ENCODE measurements at regions of chr22 and their contacts with region 1.

Region 1: GRCh38 chr22:36065775-36066559 is 37.3 kb upstream of the RBFOX2 start:
- DNase-seq: peak; percentile 73
- H3K4me3 Mint-ChIP-seq: peak overlapping the region; percentile 72
- H3K27ac Mint-ChIP-seq: peak overlapping the region; percentile 40
- H3K4me1 Mint-ChIP-seq: peaks cover 11% of the 10 kb centered on the region
- H3K27me3 Mint-ChIP-seq: peaks cover 6% of the 10 kb centered on the region

Region 2: DNA sequence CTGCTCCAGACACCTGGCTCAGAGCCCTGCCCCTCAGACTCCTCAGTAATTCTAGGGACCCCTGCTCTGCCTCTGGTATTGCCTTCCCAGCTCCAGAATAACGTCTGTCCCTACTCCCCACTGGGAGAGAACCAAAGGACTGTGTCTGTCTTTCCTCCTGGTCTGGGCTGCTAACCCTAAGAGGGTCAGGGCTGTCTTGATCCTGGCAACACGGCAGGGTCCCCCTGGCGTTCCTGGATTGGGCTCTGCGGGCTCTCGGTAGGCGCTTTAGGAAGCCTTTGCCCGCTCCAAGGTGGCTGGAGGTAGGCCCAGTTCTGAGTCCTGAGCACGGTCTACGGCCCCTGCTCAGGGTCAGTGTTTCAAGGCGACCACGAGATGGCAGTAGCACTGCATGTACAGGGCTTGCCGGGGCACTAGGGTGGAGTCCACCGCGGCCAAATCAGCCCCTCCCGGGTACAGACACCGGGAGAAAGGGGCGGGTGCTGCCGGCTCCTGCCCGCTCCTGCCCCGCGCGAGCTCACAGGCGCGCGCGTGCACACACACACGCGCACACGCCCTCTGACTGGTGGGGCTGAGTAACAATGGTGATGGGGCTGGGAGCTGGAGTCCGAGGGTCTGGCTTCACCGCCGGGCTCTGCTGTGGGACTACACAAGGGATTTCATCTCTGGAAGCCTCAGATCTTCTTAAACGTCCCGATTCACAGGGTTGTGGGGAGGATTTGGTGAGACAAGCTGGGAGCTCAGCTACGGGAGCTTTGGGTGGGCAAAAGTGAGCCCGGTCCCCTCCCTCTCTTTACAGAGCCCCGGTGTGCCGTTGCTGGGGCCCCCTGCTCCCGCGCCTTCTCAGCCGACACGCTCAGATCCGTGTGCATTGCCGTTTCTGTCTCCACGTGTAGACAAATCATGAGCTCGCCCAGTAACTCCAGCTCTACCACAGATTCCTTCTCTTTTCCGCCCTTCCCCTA is 715.1 kb before region 1 on chr22:
- CTCF ChIA-PET with region 1: interaction called, 10 read pairs
- POLR2A ChIA-PET with region 1: no interaction called
- DNase-seq: peak; percentile 91
- H3K4me3 Mint-ChIP-seq: peak overlapping the region; percentile 74
- H3K27ac Mint-ChIP-seq: no peak overlapping the region
- H3K4me1 Mint-ChIP-seq: peaks cover 24% of the 10 kb centered on the region
- H3K27me3 Mint-ChIP-seq: peaks cover 5% of the 10 kb centered on the region

Region 3: DNA sequence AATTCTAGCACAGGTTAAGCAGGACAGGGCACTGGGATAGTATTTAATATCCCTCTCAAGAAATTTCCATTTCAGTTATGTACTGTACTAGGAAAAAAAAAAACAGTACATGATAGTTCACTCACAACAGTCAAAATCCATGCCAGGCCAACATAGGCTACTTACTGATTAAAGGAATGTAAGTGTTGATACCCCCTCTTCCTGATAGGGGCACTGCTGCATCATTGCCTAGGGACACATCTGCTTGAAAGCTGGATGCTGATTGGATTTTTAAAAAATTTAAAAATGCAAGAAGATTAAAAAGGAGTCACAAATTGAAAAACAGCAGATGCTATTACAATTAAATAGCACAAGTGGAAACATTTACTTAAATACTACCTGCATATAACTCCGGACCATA is 304.9 kb before region 1 on chr22:
- CTCF ChIA-PET with region 1: no interaction called
- POLR2A ChIA-PET with region 1: no interaction called
- DNase-seq: no peak
- H3K4me3 Mint-ChIP-seq: no peak overlapping the region
- H3K27ac Mint-ChIP-seq: no peak overlapping the region
- H3K4me1 Mint-ChIP-seq: no peaks in the 10 kb centered on the region
- H3K27me3 Mint-ChIP-seq: peaks cover under 1% of the 10 kb centered on the region

Region 4: DNA sequence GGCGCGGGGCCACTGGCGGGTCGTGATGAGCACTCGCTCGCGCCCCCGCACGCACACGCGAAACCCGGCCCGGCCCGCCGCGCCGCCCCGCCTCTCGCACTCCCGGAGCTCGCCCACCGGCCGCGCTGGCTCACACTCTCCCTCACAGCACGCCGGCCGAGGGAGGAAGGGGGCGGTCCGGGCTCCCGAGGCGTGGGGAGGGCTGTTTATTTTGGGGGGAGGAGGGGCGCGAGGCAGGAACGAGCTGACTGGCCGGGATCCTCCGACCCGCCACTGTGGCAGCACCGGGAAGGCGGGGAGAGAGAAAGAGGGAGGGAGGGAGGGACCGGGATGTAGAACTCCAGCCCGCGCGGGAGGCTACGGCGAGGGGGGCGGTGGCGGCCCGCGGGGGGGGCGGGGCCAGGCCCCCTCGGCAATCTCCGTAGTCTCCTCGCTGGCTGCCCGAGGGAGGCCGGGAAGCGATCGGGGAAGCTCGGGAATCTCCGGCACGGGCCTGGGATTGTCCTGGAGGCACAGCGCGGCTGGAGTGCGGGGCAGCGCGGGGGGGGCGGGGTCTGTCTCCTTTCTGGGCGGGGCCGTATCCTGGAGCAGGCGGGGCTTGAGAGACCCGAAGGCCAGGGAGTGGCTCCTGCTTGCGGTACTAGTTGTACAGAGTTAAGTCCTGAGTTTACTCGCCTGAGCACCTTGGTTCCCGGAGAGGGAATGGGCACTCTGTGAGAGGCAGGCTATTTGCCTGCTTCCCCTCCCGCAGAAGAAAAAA is 37.1 kb before region 1 on chr22 and contains the start of gene RBFOX2:
- CTCF ChIA-PET with region 1: interaction called, 14 read pairs
- POLR2A ChIA-PET with region 1: interaction called, 4 read pairs
- DNase-seq: peak; percentile 63
- H3K4me3 Mint-ChIP-seq: peak within 1 kb of the TSS; percentile 77
- H3K27ac Mint-ChIP-seq: no peak within 1 kb of the TSS
- H3K4me1 Mint-ChIP-seq: peaks cover 17% of the 10 kb centered on the region
- H3K27me3 Mint-ChIP-seq: peaks cover 39% of the 10 kb centered on the region
- total RNA-seq, gene RBFOX2: 0.83 to 1.4 TPM

Region 5: DNA sequence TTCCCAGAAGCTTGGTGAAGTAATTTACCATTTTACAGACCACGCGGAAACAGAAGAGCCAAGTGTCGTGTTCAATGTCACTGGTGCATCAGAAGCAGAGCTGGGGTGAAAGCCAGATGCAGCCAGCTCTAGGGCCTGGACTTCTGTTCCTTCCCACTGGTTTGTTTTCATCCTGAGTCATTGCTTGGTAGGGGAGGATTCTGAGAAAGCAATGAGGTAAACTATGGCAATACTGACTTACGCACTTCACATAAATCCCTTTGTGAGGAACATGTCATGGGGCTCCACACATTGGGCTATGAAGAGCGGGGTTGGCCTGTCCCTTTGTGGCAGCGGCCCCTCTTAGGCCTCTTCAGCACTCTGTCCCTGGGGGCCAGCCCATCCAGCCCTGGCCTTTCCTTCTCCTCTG is 15.1 kb after region 1 on chr22:
- CTCF ChIA-PET with region 1: interaction called, 34 read pairs
- POLR2A ChIA-PET with region 1: no interaction called
- DNase-seq: no peak
- H3K4me3 Mint-ChIP-seq: no peak overlapping the region
- H3K27ac Mint-ChIP-seq: no peak overlapping the region
- H3K4me1 Mint-ChIP-seq: no peaks in the 10 kb centered on the region
- H3K27me3 Mint-ChIP-seq: peaks cover 3% of the 10 kb centered on the region

Region 6: DNA sequence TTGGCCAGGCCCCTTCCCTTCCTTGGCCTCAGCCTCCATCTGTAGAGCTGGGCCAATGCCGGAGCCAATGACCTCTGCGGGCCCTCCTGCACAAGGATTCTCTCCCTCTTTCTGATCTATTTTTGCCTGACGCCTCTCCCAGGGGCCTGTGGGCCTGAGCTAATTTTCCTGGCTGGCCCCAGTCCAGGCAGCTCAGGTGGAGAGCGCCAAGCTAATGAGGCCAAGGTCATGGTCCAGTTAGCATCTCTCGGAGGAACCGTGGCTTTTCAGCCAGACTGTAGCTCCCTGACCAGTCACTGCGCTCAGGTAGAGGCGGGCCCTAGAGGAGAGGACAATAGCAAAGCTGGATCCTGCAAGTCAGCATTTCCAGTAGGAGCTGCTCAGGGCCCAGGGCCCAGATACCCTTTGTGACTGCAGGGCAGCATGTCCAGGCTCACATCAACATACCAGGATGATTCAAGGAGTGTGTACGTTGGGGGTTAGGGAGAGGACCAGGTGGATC is 51.1 kb after region 1 on chr22:
- CTCF ChIA-PET with region 1: interaction called, 10 read pairs
- POLR2A ChIA-PET with region 1: no interaction called
- DNase-seq: no peak
- H3K4me3 Mint-ChIP-seq: no peak overlapping the region
- H3K27ac Mint-ChIP-seq: no peak overlapping the region
- H3K4me1 Mint-ChIP-seq: no peaks in the 10 kb centered on the region
- H3K27me3 Mint-ChIP-seq: no peaks in the 10 kb centered on the region

Region 7: GRCh38 chr22:36156515-36157419 is 90.8 kb after region 1 on chr22:
- CTCF ChIA-PET with region 1: interaction called, 12 read pairs
- POLR2A ChIA-PET with region 1: no interaction called
- DNase-seq: peak; percentile 70
- H3K4me3 Mint-ChIP-seq: peak overlapping the region; percentile 95
- H3K27ac Mint-ChIP-seq: peak overlapping the region; percentile 91
- H3K4me1 Mint-ChIP-seq: peaks cover 87% of the 10 kb centered on the region
- H3K27me3 Mint-ChIP-seq: no peaks in the 10 kb centered on the region

Region 8: GRCh38 chr22:36239401-36240171 is 173.6 kb after region 1 on chr22 and contains the start of gene APOL2:
- CTCF ChIA-PET with region 1: interaction called, 11 read pairs
- POLR2A ChIA-PET with region 1: no interaction called
- DNase-seq: peak; percentile 90
- H3K4me3 Mint-ChIP-seq: peak within 1 kb of the TSS; percentile 95
- H3K27ac Mint-ChIP-seq: peak within 1 kb of the TSS; percentile 91
- H3K4me1 Mint-ChIP-seq: peaks cover 45% of the 10 kb centered on the region
- H3K27me3 Mint-ChIP-seq: peaks cover 3% of the 10 kb centered on the region
- total RNA-seq, gene APOL2: 82.3 to 83.0 TPM